GM13976 (cell line): ENCODE measurements at regions of chr11 and their contacts with region 1.

Region 1: DNA sequence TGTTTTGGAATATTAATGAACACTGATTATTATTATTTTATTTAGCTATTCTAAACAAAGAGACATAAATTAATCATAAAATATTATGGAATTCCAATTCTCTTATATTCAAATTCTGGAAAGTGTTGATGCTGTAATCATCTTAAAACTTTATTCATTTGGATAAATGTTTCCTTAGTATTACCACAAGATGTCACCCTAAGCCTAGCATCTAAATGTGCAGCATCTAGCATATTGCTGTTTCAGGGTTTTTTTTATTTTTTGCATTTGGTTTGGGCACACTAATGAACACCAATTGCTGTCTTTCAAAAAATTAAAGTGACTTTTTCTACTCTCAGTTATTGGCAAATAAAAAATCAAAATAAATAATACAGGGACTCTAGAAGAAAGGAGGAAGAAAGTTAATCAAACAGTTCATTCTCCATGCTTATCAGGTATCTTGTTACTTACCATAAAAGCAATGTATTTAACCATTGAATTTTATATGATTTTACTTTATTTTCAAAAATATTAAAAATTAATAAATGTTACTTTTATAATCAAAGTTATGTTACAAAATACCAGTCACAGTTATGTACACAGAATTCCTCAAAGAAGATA is 31.8 kb downstream of the DLG2 start:
- DNase-seq: peak; percentile 32
- CTCF ChIP-seq: peak; percentile 25

Region 2: GRCh38 chr11:84558085-84558905 is 1037.1 kb before region 1 on chr11:
- in situ Hi-C with region 1: loop called (anchors 25 kb)
- DNase-seq: peak; percentile 27
- CTCF ChIP-seq: peak; percentile 63

Region 3: GRCh38 chr11:84780689-84781293 is 814.6 kb before region 1 on chr11:
- in situ Hi-C with region 1: loop called (anchors 25 kb)
- DNase-seq: no peak
- CTCF ChIP-seq: no peak

Region 4: GRCh38 chr11:85029911-85030332 is 565.5 kb before region 1 on chr11:
- in situ Hi-C with region 1: no loop called
- DNase-seq: no peak
- CTCF ChIP-seq: no peak